ENCODE measurements at regions of chr11 and their contacts with region 1.

Region 1: DNA sequence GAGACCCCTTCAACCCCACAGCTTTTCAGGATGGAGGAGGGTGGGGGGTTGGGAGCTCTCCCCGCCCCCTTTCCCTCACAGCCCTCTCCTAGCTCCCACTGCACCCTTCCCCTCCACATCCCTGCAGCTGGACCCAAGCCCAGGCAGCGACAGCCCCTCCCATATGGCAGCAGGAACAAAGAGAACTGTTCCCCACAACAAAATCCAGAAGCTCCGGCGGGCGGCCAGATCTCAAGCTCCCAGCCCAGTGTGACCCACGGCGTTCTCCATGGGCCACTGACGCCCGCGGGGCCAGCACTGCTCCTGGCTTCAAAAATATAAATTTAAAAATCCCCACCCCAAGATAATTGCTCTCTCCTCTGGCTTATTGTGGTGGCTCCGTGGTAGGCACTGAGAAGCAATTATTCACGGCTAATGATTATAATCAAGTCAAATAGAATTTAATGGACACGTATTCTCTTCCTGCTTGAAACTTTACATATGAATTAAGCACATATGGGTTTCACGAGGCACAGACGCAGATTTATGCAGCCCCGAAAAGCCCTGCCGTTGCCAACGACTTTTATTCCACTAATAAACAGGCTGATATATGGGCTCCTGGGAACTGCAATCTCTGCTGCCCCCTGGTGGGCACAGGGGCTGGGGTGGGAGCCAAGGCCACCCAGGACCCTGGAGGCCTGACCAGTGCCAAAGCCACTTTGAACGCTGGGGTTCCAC is 17.6 kb downstream of the MACROD1 start:
- DNase-seq: peak; percentile 94
- H3K4me3 ChIP-seq: peak overlapping the region; percentile 34
- H3K27ac ChIP-seq: peak overlapping the region; percentile 75
- H3K4me1 ChIP-seq: peaks cover 22% of the 10 kb centered on the region
- H3K27me3 ChIP-seq: no peaks in the 10 kb centered on the region
- CTCF ChIP-seq: peak; percentile 100

Region 2: DNA sequence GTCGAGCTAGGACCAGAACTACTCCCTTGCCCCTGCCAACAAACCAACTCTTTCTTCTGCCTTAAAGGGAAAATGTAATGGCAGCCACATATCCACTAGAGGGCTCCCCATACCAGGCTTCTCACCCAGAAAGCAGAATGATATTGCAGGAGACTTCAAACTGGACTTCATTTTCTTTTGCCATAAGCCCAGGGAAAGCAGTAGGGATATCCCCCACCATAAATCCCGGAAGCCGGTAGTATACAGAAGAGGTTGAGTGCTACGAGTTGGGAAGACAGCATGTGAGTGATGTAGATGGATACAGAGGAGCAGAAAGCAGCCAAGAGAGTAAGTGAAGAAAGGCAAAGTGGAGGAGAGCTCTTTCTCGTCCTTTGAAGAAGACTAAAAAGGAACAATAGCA is 669.5 kb before region 1 on chr11:
- CTCF ChIA-PET with region 1: no interaction called
- POLR2A ChIA-PET with region 1: no interaction called
- intact Hi-C with region 1: loop called (anchors 5 kb)
- DNase-seq: peak; percentile 83
- H3K4me3 ChIP-seq: no peak overlapping the region
- H3K27ac ChIP-seq: no peak overlapping the region
- H3K4me1 ChIP-seq: no peaks in the 10 kb centered on the region
- H3K27me3 ChIP-seq: no peaks in the 10 kb centered on the region
- CTCF ChIP-seq: peak; percentile 97

Region 3: GRCh38 chr11:64000026-64000739 is 148.2 kb before region 1 on chr11:
- CTCF ChIA-PET with region 1: interaction called, 9 read pairs
- POLR2A ChIA-PET with region 1: no interaction called
- intact Hi-C with region 1: loop called (anchors 1 kb)
- DNase-seq: peak; percentile 91
- H3K4me3 ChIP-seq: peak overlapping the region; percentile 41
- H3K27ac ChIP-seq: no peak overlapping the region
- H3K4me1 ChIP-seq: peaks cover 50% of the 10 kb centered on the region
- H3K27me3 ChIP-seq: no peaks in the 10 kb centered on the region
- CTCF ChIP-seq: peak; percentile 75